Caco-2 (cell line): ENCODE measurements at regions of chr7 and their contacts with region 1.

Region 1: GRCh38 chr7:139340037-139340807 is 915 bp upstream of the FMC1 start:
- DNase-seq: peak; percentile 98 to 100
- H3K4me3 ChIP-seq: peak overlapping the region; percentile 76
- H3K4me3 Mint-ChIP-seq: peak overlapping the region; percentile 89
- H3K27ac Mint-ChIP-seq: peak overlapping the region; percentile 100
- H3K4me1 ChIP-seq: peaks cover 4% of the 10 kb centered on the region; the same call in 1 of the 2 replicates
- H3K4me1 Mint-ChIP-seq: peaks cover 20% of the 10 kb centered on the region
- H3K27me3 ChIP-seq: no peaks in the 10 kb centered on the region
- H3K27me3 Mint-ChIP-seq: peaks cover 4% of the 10 kb centered on the region
- CTCF ChIP-seq: peak; percentile 53 to 90

Region 2: DNA sequence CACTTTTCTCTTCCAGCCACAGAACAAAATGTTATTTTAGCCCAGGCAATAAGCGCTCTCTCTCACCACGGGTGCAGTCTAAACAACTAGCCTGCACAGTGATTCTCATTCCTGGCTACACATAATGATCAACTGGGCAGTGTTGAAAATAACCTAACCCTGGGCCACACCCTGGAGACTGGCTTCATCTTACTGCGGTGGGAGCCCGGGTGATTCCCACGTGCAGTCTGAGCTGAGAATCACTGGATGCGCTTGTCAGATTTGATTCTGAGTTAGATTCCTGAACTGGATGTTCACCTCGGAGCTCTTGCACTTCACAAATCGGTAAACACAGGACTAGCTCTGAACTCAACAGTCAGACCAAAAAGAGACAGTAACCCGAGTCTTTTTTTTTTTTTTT is 245.6 kb before region 1 on chr7:
- CTCF ChIA-PET with region 1: no interaction called
- POLR2A ChIA-PET with region 1: no interaction called
- intact Hi-C with region 1: loop called (anchors 5 kb)
- DNase-seq: no peak
- H3K4me3 ChIP-seq: no peak overlapping the region
- H3K4me3 Mint-ChIP-seq: no peak overlapping the region
- H3K27ac Mint-ChIP-seq: no peak overlapping the region
- H3K4me1 ChIP-seq: peaks cover 20% of the 10 kb centered on the region
- H3K4me1 Mint-ChIP-seq: peaks cover 27% of the 10 kb centered on the region
- H3K27me3 ChIP-seq: no peaks in the 10 kb centered on the region
- H3K27me3 Mint-ChIP-seq: no peaks in the 10 kb centered on the region
- CTCF ChIP-seq: no peak

Region 3: GRCh38 chr7:139133335-139134139 is 206.7 kb before region 1 on chr7:
- CTCF ChIA-PET with region 1: interaction called, 4 read pairs
- POLR2A ChIA-PET with region 1: interaction called, 5 read pairs
- intact Hi-C with region 1: loop called (anchors 1 kb)
- DNase-seq: peak; percentile 83 to 86
- H3K4me3 ChIP-seq: peak overlapping the region; percentile 65
- H3K4me3 Mint-ChIP-seq: peak overlapping the region; percentile 91
- H3K27ac Mint-ChIP-seq: peak overlapping the region; percentile 86
- H3K4me1 ChIP-seq: no peaks in the 10 kb centered on the region
- H3K4me1 Mint-ChIP-seq: peaks cover 8% of the 10 kb centered on the region
- H3K27me3 ChIP-seq: no peaks in the 10 kb centered on the region
- H3K27me3 Mint-ChIP-seq: no peaks in the 10 kb centered on the region
- CTCF ChIP-seq: no peak

Region 4: DNA sequence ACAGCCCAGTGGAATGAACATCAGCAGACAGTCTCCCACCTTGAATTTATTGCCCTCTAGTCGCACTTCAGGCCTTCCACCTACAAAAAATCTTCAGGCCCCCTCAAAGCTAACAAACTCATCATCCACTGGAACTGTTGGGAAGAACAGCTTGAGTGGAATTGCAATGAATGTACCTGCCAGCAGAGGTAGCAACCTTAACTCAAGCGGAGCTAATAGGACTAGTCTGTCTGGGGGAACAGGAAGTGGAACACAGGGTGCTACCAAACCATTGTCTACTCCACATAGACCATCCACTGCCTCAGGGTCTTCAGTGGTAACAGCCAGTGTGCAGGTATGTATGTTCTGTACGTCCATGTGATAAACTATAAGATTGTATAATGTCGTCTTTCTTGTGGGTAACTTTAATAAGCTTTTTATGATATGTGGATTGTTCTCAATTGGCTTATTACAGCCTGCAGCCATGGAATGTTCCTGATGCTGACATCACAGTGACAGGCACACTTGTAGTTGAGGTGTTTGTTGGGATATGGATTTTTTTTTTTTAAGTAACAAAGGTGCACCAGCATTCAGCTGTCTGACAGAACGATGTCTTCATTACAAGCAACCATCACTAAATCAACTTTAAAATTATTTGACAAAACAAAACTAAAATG is 55.9 kb before region 1 on chr7:
- CTCF ChIA-PET with region 1: no interaction called
- POLR2A ChIA-PET with region 1: no interaction called
- intact Hi-C with region 1: loop called (anchors 1 kb)
- DNase-seq: peak in 1 of 2 experiments; percentile 28
- H3K4me3 ChIP-seq: no peak overlapping the region
- H3K4me3 Mint-ChIP-seq: no peak overlapping the region
- H3K27ac Mint-ChIP-seq: no peak overlapping the region
- H3K4me1 ChIP-seq: no peaks in the 10 kb centered on the region
- H3K4me1 Mint-ChIP-seq: no peaks in the 10 kb centered on the region
- H3K27me3 ChIP-seq: no peaks in the 10 kb centered on the region
- H3K27me3 Mint-ChIP-seq: no peaks in the 10 kb centered on the region
- CTCF ChIP-seq: peak; percentile 23 to 26

Region 5: DNA sequence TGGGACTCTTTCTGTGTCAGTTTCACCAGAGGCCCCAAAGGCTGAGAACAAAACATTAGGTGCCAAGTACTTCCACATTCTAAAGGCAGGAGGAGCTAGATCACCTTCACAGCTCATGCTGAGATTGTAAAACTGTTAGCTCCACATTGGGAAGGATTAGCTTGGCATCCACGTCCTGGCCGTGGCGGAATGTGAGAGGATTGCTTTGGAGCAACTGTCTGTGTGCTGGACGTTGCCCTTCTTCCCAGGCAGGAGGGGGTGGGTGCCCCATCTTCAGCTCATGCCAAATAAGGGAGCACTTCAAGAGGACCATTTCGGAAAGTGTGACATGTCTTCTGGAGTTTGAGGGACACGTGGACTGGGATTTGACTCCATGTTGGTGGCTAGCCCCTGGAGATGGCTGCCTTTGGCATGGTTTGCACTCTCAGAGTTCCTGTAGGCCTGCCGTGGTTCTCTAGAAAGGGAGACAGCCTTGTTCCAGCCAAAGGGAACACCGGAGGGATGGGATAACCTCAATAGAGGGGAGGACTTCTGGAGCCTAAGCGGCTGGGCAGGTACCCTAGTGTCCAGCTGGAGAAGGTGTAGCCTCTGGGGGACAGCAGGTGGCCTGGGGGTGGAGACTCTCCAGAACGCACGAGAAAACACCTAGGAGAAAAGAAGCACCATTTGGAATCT is 19.0 kb before region 1 on chr7:
- CTCF ChIA-PET with region 1: interaction called, 13 read pairs
- POLR2A ChIA-PET with region 1: no interaction called
- intact Hi-C with region 1: no loop called
- DNase-seq: peak; percentile 46 to 49
- H3K4me3 ChIP-seq: no peak overlapping the region
- H3K4me3 Mint-ChIP-seq: no peak overlapping the region
- H3K27ac Mint-ChIP-seq: no peak overlapping the region
- H3K4me1 ChIP-seq: peaks cover 16% of the 10 kb centered on the region
- H3K4me1 Mint-ChIP-seq: peaks cover 16% of the 10 kb centered on the region
- H3K27me3 ChIP-seq: no peaks in the 10 kb centered on the region
- H3K27me3 Mint-ChIP-seq: no peaks in the 10 kb centered on the region
- CTCF ChIP-seq: peak; percentile 24 to 38

Region 6: GRCh38 chr7:140696680-140697446 is 1356.6 kb after region 1 on chr7 and contains the start of gene NDUFB2:
- CTCF ChIA-PET with region 1: no interaction called
- POLR2A ChIA-PET with region 1: no interaction called
- intact Hi-C with region 1: loop called (anchors 10 kb)
- DNase-seq: peak; percentile 86 to 93
- H3K4me3 ChIP-seq: peak within 1 kb of the TSS; percentile 87
- H3K4me3 Mint-ChIP-seq: peak within 1 kb of the TSS; percentile 95
- H3K27ac Mint-ChIP-seq: peak within 1 kb of the TSS; percentile 94
- H3K4me1 ChIP-seq: 0 out of 2 replicates have a peak, but pooled peaks cover 3% of the 10 kb centered on the region
- H3K4me1 Mint-ChIP-seq: peaks cover 11% of the 10 kb centered on the region
- H3K27me3 ChIP-seq: no peaks in the 10 kb centered on the region
- H3K27me3 Mint-ChIP-seq: no peaks in the 10 kb centered on the region
- CTCF ChIP-seq: no peak
- total RNA-seq, gene NDUFB2: 166 and 188 TPM in 2 replicates